Activated CD4-positive, alpha-beta memory T cell treated with anti-CD3 and anti-CD28 coated beads for 36 hours (primary cell): ENCODE measurements at regions of chr6 and their contacts with region 1.

Region 1: DNA sequence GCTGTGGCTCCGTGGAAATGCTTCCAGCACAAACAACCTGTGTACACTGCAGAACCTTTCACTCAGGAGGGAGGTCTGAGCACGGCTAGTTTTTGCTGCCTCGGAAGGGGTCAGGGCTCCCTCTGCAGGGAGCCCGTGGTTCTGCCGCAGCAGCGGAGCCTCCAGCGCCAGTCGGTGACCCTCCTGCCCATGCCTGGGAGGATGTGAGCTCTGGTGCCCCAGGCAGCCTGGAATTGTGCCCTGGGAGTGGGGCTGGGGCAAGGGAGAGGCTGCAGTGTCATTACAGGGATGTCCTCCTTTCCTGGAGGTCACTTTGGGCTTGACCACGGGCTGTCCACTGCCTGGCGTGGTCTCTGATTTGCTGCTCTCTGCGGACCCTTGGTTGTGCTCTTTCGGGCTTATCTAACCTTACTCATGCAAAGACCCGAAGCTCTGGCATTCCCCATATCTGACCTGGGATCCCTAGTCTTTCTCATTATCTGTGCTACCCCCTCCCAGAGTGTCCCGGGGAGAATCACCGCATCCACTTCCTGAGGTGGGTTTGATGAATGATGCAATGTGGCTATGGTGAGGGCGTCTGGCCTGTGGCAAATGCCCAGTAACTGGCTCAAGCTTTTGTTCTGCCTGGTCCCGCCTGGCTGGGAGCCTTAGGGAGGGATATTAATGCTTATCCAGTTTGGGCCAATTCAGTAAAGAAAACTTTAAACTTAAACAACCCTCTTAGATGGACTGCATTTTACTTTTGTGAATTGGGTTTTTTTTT is 59.6 kb upstream of the TAGAP start:
- DNase-seq: peak; percentile 88
- H3K4me3 Mint-ChIP-seq: peak overlapping the region; percentile 54
- H3K27ac Mint-ChIP-seq: peak overlapping the region; percentile 40
- H3K4me1 Mint-ChIP-seq: peaks cover 75% of the 10 kb centered on the region
- H3K27me3 Mint-ChIP-seq: no peaks in the 10 kb centered on the region

Region 2: DNA sequence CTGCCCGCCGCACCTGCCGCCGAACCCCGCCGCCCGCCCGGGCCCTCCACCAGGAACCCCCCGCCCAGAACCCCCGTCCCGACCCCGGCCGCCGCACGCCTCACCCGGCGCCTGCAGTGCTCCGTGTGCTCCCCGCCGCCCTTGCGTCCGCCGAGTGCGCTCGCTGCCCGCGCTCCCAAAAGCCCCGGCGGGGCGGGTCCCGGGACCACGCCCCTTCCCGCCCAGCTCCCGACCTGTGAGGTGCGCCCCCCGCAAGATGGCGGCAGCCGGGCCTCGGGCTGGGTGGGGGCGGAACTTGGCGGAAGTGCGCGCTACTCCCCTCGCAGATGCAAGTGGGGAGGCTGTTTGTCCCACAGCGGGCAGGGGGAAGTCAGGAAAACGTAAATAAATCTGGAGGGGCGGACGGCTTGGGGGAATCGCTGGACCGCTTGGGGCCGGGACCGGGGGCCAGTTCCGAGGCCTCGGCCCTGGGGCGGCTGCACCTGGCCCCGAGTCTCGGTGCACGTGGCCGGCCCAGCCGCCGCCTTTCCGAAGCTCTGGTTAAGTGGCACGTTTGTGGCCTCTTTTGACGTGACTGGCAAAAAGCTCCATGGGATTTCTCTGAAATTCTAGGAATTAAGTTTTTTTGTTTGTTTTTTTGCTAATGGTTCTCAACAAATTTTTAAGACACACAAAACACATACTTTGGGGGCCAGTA is 285.0 kb before region 1 on chr6 and contains the start of gene EZR:
- CTCF ChIA-PET with region 1: no interaction called
- POLR2A ChIA-PET with region 1: no interaction called
- intact Hi-C with region 1: loop called (anchors 2 kb)
- DNase-seq: peak; percentile 91
- H3K4me3 Mint-ChIP-seq: peak within 1 kb of the TSS; percentile 100
- H3K27ac Mint-ChIP-seq: peak within 1 kb of the TSS; percentile 99
- H3K4me1 Mint-ChIP-seq: peaks cover 43% of the 10 kb centered on the region
- H3K27me3 Mint-ChIP-seq: no peaks in the 10 kb centered on the region
- total RNA-seq, gene EZR: 255 to 256 TPM

Region 3: DNA sequence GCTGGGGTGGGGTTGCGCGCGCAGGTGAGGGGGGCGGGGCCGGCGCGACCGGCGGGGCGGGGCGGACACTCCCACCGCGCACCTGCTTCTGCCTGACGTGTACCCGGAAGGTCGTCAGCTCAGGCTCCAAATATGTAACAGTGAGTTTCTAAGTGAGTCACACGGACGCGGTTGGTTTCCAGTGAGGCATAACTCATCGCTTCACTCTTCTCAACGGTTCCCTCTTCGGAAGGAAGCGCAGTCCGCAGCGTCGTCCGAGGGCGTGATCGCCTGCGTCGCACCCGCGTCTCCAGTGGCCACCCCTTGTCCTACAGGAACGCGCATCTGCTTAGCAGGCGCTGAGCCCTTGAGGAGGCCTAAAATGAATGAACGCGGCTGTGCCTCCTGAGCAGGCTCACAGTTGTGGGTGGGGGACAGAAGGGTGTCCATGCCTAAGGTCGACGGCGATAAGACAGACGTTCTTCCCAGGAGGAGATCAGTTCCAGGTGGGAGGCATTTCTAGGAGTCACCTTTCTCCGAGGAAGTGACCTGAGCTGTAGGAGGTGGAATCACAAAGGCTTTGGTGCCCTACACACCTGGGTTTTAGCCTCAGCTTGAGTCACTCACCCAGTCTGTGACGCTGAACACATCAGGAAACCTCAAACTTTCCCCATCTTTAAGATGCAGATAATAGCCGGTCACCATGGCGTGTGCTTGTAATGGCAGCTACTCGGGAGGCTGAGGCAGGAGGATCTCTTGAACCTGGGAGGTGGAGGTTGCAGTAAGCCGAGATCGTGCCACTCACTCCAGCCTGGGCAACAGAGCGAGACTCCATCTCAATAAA is 234.3 kb before region 1 on chr6:
- CTCF ChIA-PET with region 1: interaction called, 3 read pairs
- POLR2A ChIA-PET with region 1: no interaction called
- intact Hi-C with region 1: loop called (anchors 5 kb)
- DNase-seq: peak; percentile 97
- H3K4me3 Mint-ChIP-seq: peak overlapping the region; percentile 82
- H3K27ac Mint-ChIP-seq: peak overlapping the region; percentile 98
- H3K4me1 Mint-ChIP-seq: peaks cover 34% of the 10 kb centered on the region
- H3K27me3 Mint-ChIP-seq: peaks cover 1% of the 10 kb centered on the region

Region 4: GRCh38 chr6:158999666-159000403 is 104.5 kb before region 1 on chr6 and contains the start of gene RSPH3:
- CTCF ChIA-PET with region 1: interaction called, 498 read pairs
- POLR2A ChIA-PET with region 1: interaction called, 6 read pairs
- intact Hi-C with region 1: loop called (anchors 1 kb)
- DNase-seq: peak; percentile 97
- H3K4me3 Mint-ChIP-seq: peak within 1 kb of the TSS; percentile 97
- H3K27ac Mint-ChIP-seq: peak within 1 kb of the TSS; percentile 86
- H3K4me1 Mint-ChIP-seq: peaks cover 34% of the 10 kb centered on the region
- H3K27me3 Mint-ChIP-seq: no peaks in the 10 kb centered on the region
- total RNA-seq, gene RSPH3: 6.1 to 6.8 TPM

Region 5: DNA sequence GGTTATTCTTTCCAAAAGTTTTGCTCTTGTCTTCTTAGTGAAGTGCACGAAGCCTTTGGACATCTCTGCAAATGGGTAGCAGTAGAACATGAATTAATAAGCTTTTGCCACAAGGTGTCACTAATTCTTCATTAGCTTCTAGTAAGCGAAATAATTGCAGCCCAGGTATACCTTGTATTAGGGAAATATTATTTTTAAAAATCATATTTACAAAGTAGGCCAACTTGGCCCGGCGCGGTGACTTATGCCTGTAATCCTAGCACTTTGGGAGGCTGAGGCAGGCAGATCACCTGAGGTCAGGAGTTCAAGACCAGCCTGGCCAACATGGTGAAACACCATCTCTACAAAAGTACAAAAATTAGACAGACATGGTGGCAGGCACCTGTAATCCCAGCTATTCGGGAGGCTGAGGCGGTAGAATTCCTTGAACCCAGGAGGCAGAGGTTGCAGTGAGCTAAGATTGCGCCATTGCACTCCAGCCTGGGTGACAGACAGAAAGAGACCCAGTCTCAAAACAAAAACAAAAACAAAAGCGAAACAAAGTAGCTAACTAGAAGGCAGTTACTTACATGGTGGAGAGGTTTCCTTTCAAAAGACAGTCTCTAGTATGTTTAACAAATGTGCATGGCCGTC is 95.6 kb before region 1 on chr6:
- CTCF ChIA-PET with region 1: interaction called, 498 read pairs
- POLR2A ChIA-PET with region 1: interaction called, 4 read pairs
- intact Hi-C with region 1: loop called (anchors 1 kb)
- DNase-seq: peak; percentile 23
- H3K4me3 Mint-ChIP-seq: peak overlapping the region; percentile 42
- H3K27ac Mint-ChIP-seq: peak overlapping the region; percentile 14
- H3K4me1 Mint-ChIP-seq: peaks cover 35% of the 10 kb centered on the region
- H3K27me3 Mint-ChIP-seq: no peaks in the 10 kb centered on the region

Region 6: GRCh38 chr6:159056003-159056402 is 48.3 kb before region 1 on chr6:
- CTCF ChIA-PET with region 1: interaction called, 12 read pairs
- POLR2A ChIA-PET with region 1: interaction called, 3 read pairs
- intact Hi-C with region 1: no loop called
- DNase-seq: no peak
- H3K4me3 Mint-ChIP-seq: no peak overlapping the region
- H3K27ac Mint-ChIP-seq: peak overlapping the region; percentile 53
- H3K4me1 Mint-ChIP-seq: peaks cover 73% of the 10 kb centered on the region
- H3K27me3 Mint-ChIP-seq: no peaks in the 10 kb centered on the region

Region 7: DNA sequence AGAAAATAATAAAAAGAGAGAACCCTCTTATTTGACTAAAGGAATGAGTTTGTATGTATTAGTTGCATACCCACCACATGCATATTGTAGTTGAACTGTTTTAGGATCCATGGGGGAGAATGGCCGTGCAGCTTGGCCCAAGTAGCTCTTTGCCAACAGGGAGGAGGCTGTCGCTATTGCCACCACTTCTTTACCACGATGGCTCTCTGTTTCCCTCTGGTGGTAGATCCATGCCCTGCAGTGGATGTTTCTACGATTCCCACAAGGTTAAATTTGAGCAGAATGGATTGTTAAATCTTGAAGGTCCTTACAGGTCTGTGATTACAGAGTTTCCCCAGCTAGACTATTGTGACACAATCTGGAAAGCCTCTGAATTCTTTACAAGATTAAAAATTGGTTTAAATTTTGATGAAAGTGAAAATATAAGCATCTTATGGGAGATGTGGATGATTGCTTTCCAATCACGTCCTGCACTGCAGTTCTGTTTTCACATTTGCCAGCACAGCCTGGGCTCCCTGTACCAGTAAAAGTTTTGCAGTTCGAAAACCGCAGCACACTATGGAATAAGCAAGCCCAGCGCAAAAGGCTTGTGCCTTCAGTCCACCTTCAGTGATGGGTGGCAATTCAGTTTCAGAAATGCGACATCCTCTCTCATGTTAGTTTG is 30.5 kb after region 1 on chr6:
- CTCF ChIA-PET with region 1: interaction called, 111 read pairs
- POLR2A ChIA-PET with region 1: no interaction called
- intact Hi-C with region 1: no loop called
- DNase-seq: peak; percentile 85
- H3K4me3 Mint-ChIP-seq: no peak overlapping the region
- H3K27ac Mint-ChIP-seq: no peak overlapping the region
- H3K4me1 Mint-ChIP-seq: no peaks in the 10 kb centered on the region
- H3K27me3 Mint-ChIP-seq: peaks cover 7% of the 10 kb centered on the region